PC-3 (cell line): ENCODE measurements at regions of chr12 and their contacts with region 1.

Region 1: DNA sequence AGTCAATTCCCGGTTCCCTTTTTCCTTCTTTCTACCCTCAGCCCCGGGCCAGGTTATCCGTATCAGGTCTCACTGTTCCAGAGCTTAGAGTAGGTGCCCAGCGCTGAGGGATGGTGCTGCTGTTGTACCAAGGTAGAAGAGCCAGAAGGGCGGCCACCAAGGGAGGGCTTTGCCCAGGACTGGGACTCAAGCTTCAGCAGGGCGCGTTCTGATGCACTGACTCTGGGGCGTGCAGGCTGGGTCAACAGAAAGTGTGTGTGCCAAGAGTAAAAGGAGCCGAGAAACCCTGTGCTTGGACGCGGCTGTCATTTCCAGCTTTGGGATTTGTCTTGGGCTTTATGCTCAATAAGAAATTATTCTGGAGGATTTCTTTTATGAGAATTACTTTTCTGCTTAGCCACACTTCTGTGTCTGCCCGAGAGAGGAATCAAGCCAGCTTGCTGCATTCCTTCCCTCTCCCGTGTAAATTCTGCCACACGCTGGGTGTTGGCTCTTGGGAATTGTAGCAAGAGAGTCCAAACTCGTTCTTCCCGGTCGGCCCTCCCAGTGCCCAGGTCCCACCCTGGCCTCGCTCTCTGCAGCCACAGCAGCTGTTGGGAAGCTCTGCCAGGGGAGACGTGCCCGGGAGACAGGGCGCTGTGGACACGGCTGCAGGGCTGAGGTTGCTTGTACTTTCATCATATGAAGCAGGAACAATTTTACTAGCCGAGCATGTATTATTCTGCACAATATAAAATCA is 98.0 kb downstream of the FBXL14 start:
- DNase-seq: peak; percentile 40
- ATAC-seq: peak; percentile 90
- H3K4me3 ChIP-seq: peak overlapping the region; percentile 44
- H3K27ac ChIP-seq: no peak overlapping the region
- H3K4me1 ChIP-seq: peaks cover 14% of the 10 kb centered on the region
- H3K27me3 ChIP-seq: no peaks in the 10 kb centered on the region
- CTCF ChIP-seq: no peak

Region 2: DNA sequence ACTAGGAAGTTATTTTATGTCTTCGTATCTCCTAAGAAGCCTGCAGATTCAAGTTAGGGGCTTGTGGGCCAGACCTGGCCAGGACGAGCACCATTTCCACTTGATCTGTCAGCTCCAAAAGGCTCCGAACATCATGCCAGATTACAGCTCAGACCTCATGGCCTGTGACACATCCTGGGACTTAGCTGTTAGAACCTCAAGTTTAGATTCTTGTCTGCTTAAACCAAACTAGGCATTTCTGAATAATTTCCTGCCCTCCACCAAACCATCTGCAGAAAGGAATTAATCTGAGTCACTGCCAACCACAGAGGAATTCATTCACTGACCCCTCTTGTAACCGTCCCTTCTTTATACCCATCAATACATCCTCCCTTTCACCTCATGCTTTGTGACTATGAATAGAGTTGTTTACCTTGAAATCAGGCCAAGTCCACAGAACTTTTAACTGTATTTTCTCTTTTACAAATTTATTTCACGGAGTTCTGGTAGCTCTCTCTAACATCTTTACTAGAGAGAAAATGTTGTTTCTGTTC is 22.2 kb before region 1 on chr12:
- CTCF ChIA-PET with region 1: no interaction called
- POLR2A ChIA-PET with region 1: no interaction called
- intact Hi-C with region 1: loop called (anchors 2 kb)
- DNase-seq: peak; percentile 95
- ATAC-seq: peak; percentile 89
- H3K4me3 ChIP-seq: peak overlapping the region; percentile 55
- H3K27ac ChIP-seq: peak overlapping the region; percentile 95
- H3K4me1 ChIP-seq: peaks cover 33% of the 10 kb centered on the region
- H3K27me3 ChIP-seq: no peaks in the 10 kb centered on the region
- CTCF ChIP-seq: no peak